IMR-90 (cell line): ENCODE measurements at regions of chr13 and their contacts with region 1.

Region 1: DNA sequence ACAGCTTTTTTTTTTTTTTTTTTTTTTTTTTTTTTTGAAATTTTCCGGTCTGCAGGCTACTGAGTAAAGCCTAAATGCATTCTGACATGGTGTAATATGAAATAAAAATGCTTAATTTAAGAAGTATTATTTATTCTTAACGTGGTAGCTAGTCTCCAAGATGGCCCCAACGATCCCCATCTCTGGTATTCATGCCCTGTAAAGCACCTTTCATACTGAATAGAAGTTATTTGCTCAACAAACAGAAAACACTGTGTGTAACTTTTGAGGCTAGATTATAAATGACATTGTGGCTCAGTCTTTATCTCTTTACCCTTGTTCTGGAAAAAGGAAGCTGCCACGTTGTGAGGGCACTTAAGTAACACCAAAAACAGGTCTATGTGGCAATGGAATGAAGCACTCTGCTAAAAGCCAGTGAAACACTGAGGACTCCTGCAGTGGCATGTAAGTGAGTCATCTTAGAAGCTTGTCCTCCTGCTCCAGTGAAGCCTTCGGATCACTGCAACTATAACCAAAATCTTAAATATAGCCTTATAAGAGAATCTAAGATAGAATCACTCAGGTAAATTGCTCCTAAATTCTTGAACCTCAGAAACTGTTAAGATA is 128.7 kb downstream of the UGGT2 start:
- DNase-seq: peak; percentile 86
- ATAC-seq: peak; percentile 98
- H3K4me3 ChIP-seq: no peak overlapping the region
- H3K27ac ChIP-seq: no peak overlapping the region
- H3K4me1 ChIP-seq: no peaks in the 10 kb centered on the region
- H3K27me3 ChIP-seq: no peaks in the 10 kb centered on the region
- CTCF ChIP-seq: no peak
- POLR2A ChIP-seq: no peak
- RAD21 ChIP-seq: no peak

Region 2: DNA sequence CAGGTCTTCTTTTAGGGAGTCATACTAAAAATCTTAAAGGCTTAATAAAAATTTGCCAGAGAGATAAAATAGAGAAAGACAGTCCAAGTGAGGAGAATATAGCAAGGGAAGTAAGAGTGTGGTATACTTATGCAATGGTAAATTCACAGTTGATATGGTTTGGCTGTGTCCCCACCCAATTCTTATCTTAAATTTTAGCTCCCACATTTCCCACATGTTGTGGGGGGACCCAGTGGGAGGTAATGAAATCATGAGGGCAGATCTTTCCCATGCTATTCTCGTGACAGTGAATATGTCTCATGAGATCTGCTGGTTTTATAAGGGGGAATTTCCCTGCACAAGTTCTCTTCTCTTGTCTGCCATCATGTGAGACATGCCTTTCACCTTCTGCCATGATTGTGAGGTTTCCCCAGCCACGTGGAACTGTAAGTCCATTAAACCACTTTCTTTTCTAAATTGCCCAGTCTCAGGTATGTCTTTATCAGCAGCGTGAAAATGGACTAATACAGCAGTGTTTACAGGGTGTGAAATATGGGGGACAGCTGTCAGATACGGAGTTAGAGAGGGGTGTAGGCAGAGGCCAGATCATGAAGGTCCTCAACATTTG is 13.3 kb after region 1 on chr13:
- CTCF ChIA-PET with region 1: no interaction called
- POLR2A ChIA-PET with region 1: interaction called, 34 read pairs
- dilution Hi-C with region 1: no loop called
- in situ Hi-C with region 1: no loop called
- intact Hi-C with region 1: no loop called
- DNase-seq: no peak
- ATAC-seq: no peak
- H3K4me3 ChIP-seq: no peak overlapping the region
- H3K27ac ChIP-seq: no peak overlapping the region
- H3K4me1 ChIP-seq: no peaks in the 10 kb centered on the region
- H3K27me3 ChIP-seq: no peaks in the 10 kb centered on the region
- CTCF ChIP-seq: no peak
- POLR2A ChIP-seq: no peak
- RAD21 ChIP-seq: no peak